PC-9 (cell line): ENCODE measurements at regions of chr7 and their contacts with region 1.

Region 1: DNA sequence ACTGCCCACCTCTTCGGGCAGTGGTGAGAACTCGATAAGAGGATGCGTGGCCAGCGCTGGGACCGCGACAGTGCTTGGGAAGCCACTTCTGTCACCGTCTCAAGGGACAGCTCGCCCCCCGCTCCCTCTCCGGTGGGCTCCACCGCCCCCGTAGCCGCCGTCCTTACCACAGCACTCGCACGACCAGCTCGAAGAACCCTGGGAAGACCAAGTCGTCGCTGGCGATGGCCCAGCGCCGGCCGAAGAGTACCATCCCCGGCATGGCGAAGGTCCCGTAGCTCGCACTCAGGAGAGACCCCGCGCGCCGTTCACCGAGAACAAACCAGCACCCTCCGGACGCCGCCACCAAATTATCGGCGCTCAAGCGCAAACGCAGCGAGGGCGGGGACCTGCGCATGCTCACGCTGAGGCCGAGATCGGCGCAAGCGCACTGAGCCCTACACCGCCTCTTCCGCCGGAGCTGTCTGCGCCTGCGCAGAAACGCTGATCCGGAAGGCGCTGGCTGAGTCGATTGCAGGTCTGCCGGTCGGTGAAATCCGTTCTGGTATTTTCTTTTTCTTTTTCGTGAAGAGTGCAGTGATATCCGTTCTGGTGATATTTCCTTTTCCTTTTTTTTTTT is at the start of gene DAGLB:
- DNase-seq: peak; percentile 85 to 97
- H3K4me3 ChIP-seq: peak within 1 kb of the TSS; percentile 93
- H3K27ac ChIP-seq: peak within 1 kb of the TSS; percentile 96
- H3K4me1 ChIP-seq: peaks cover 40% of the 10 kb centered on the region
- H3K27me3 ChIP-seq: no peaks in the 10 kb centered on the region
- CTCF ChIP-seq: no peak; the same call in 1 of the 2 replicates
- total RNA-seq, gene DAGLB: 46.7 and 56.4 TPM in 2 replicates

Region 2: DNA sequence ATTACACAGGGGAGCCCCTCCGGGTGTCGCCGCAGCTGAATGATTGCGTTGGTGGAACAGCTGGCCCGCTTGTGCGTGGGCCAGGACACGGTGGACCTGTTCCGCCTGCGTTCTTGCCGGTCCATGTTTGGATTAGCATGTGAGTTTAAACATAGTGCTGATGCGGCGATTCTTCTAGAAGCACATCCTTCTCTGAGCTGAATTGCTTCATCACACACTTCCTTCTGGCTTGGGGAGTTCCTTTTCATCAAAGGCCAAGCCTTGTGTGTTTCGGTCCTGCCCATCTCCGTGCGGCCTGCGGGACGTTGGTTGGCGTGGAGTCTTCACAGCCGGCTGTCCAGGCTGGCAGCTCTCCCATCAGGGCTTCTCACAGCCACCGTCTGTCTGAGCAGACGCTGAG is 1210.4 kb before region 1 on chr7:
- CTCF ChIA-PET with region 1: interaction called, 13 read pairs
- POLR2A ChIA-PET with region 1: no interaction called
- intact Hi-C with region 1: no loop called
- DNase-seq: no peak
- H3K4me3 ChIP-seq: no peak overlapping the region
- H3K27ac ChIP-seq: no peak overlapping the region
- H3K4me1 ChIP-seq: peaks cover 19% of the 10 kb centered on the region
- H3K27me3 ChIP-seq: no peaks in the 10 kb centered on the region
- CTCF ChIP-seq: no peak

Region 3: GRCh38 chr7:6057316-6058129 is 390.2 kb before region 1 on chr7:
- CTCF ChIA-PET with region 1: no interaction called
- POLR2A ChIA-PET with region 1: interaction called, 19 read pairs
- intact Hi-C with region 1: no loop called
- DNase-seq: no peak
- H3K4me3 ChIP-seq: peak overlapping the region; percentile 87
- H3K27ac ChIP-seq: peak overlapping the region; percentile 88; the same call in 1 of the 2 replicates
- H3K4me1 ChIP-seq: peaks cover 16% of the 10 kb centered on the region
- H3K27me3 ChIP-seq: no peaks in the 10 kb centered on the region
- CTCF ChIP-seq: no peak

Region 4: DNA sequence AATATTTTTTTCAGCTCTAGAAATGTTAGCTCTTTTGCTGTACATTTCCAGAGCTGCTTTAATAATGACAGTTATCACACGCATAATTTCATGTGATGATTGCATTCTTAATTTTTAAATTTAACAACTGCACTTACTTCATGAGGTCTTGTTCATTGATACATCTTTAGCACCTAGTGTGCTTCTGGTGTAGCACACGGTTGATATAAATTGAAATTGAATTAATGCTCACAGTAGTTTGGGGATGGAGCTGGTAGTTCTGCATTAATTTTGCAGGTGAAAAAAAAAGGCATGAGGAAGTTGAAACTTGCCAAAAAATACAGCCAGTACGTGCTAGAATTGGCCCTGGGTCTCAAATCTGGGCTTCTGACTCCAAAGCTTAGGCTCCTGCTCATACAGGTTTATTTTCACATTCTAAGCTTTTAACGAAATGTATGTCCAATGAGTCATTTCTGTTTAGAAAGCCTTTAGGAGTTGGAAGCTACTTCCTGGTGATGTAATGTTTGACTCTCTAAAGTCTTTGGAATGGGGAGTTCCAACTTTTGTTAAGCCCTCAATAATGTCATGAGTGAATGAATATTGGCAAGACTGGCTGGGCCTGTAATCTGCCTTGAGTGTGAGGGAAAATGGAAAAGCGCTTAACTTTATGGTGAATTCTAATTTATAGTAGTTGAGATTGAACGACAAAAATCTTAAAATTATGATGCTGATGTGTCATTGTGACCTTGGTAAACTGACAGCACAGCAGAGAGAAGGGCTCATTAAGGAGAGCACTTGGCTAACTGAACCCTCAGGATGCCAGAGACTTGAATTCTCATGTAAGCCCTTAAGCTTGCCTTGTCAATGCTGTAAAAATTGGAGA is 62.3 kb before region 1 on chr7:
- CTCF ChIA-PET with region 1: no interaction called
- POLR2A ChIA-PET with region 1: interaction called, 11 read pairs
- intact Hi-C with region 1: no loop called
- DNase-seq: peak; percentile 71 to 100
- H3K4me3 ChIP-seq: peak overlapping the region; percentile 17; the same call in 1 of the 2 replicates
- H3K27ac ChIP-seq: peak overlapping the region; percentile 90
- H3K4me1 ChIP-seq: peaks cover 92% of the 10 kb centered on the region
- H3K27me3 ChIP-seq: no peaks in the 10 kb centered on the region
- CTCF ChIP-seq: no peak

Region 5: DNA sequence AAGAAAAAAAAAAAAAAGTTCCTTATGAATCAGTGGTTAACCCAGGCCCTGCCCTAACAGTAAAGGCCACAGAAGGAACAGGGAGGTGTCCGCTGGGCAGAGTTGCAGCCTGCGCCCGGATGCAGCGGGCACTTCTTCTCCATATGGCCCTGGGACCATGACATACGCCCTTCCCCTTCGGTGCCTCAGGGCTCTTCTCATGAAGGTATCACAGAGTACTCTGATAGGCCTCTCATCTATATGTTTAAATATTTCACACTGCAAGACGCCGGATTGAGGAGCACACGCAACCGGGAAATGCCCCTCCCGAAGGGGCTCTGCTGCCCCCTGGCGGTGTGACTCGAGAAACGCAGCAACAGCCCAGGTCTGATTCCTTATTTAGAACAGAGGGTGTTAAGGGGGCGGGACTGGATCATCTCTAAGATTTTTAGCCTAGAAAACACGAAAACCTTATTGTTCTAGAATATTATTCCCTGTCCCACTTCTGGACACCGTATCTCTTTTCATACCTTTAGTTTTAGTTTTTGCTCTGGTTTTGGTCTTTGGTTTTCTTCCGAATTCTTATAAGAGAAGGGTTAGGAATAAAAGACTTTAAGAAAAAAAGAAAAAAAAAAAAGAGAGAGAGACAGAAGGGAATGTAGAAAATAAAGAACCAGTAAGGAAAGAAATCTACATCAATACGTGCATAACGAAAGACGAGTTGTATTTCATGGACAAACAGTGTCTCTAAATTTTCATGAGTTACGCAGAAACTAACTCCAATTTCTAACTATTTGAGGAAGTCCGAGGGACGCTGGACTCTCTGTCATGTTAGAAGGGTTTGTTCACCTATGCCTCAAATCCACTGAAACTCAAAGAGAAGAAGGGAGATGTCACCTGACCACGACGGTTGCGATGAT is 12.0 kb before region 1 on chr7:
- CTCF ChIA-PET with region 1: interaction called, 4 read pairs
- POLR2A ChIA-PET with region 1: interaction called, 16 read pairs
- intact Hi-C with region 1: no loop called
- DNase-seq: peak; percentile 73 to 84
- H3K4me3 ChIP-seq: no peak overlapping the region
- H3K27ac ChIP-seq: no peak overlapping the region
- H3K4me1 ChIP-seq: peaks cover 12% of the 10 kb centered on the region
- H3K27me3 ChIP-seq: no peaks in the 10 kb centered on the region
- CTCF ChIP-seq: peak; percentile 97

Region 6: GRCh38 chr7:6536262-6537260 is 88.9 kb after region 1 on chr7:
- CTCF ChIA-PET with region 1: no interaction called
- POLR2A ChIA-PET with region 1: no interaction called
- intact Hi-C with region 1: no loop called
- DNase-seq: peak in 1 of 2 experiments; percentile 26
- H3K4me3 ChIP-seq: no peak overlapping the region
- H3K27ac ChIP-seq: no peak overlapping the region
- H3K4me1 ChIP-seq: no peaks in the 10 kb centered on the region
- H3K27me3 ChIP-seq: no peaks in the 10 kb centered on the region
- CTCF ChIP-seq: no peak

Region 7: DNA sequence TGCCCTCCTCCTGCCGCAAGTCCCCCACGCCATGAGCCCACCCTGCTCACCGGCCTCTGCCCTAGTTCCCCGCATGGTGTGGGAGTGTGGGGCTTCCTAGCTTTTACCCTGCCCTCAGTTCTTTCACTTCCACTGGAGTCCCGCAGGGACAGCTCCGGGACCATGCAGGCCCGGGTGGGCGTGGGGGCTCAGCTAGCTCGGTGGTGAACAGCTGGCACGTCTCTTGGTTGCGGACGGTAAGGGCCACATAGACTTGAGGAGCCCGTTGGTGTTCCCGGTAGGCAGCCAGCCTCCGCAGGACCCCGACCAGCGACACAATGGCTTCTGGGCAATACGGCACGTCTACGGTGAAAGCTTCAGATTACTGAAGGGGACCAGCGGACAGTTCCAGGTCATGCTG is 487.3 kb after region 1 on chr7:
- CTCF ChIA-PET with region 1: interaction called, 10 read pairs
- POLR2A ChIA-PET with region 1: no interaction called
- intact Hi-C with region 1: no loop called
- DNase-seq: no peak
- H3K4me3 ChIP-seq: no peak overlapping the region
- H3K27ac ChIP-seq: no peak overlapping the region
- H3K4me1 ChIP-seq: peaks cover 4% of the 10 kb centered on the region; the same call in 1 of the 2 replicates
- H3K27me3 ChIP-seq: no peaks in the 10 kb centered on the region
- CTCF ChIP-seq: no peak